IMR-90 (cell line): ENCODE measurements at regions of chr19 and their contacts with region 1.

Region 1: GRCh38 chr19:21430675-21431074 is 33.7 kb downstream of the ZNF493 start:
- DNase-seq: no peak
- ATAC-seq: no peak
- H3K4me3 ChIP-seq: no peak overlapping the region
- H3K27ac ChIP-seq: no peak overlapping the region
- H3K4me1 ChIP-seq: no peaks in the 10 kb centered on the region
- H3K27me3 ChIP-seq: no peaks in the 10 kb centered on the region
- CTCF ChIP-seq: no peak
- POLR2A ChIP-seq: no peak
- RAD21 ChIP-seq: no peak

Region 2: GRCh38 chr19:21451187-21451586 is 20.5 kb after region 1 on chr19:
- CTCF ChIA-PET with region 1: no interaction called
- POLR2A ChIA-PET with region 1: no interaction called
- dilution Hi-C with region 1: no loop called
- in situ Hi-C with region 1: no loop called
- intact Hi-C with region 1: loop called (anchors 1 kb)
- DNase-seq: no peak
- ATAC-seq: no peak
- H3K4me3 ChIP-seq: no peak overlapping the region
- H3K27ac ChIP-seq: no peak overlapping the region
- H3K4me1 ChIP-seq: no peaks in the 10 kb centered on the region
- H3K27me3 ChIP-seq: no peaks in the 10 kb centered on the region
- CTCF ChIP-seq: no peak
- POLR2A ChIP-seq: no peak
- RAD21 ChIP-seq: no peak